Body of pancreas (tissue), 4 donors: ENCODE measurements at regions of chr5 and their contacts with region 1.

Region 1: GRCh38 chr5:36866174-36866573 is 10.4 kb upstream of the NIPBL start:
- DNase-seq: no peak
- ATAC-seq: no peak
- H3K4me3 ChIP-seq: no peak overlapping the region
- H3K27ac ChIP-seq: no peak overlapping the region
- H3K4me1 ChIP-seq: peaks cover 5% of the 10 kb centered on the region
- H3K27me3 ChIP-seq: no peaks in the 10 kb centered on the region
- CTCF ChIP-seq: no peak
- POLR2A ChIP-seq: no peak

Region 2: DNA sequence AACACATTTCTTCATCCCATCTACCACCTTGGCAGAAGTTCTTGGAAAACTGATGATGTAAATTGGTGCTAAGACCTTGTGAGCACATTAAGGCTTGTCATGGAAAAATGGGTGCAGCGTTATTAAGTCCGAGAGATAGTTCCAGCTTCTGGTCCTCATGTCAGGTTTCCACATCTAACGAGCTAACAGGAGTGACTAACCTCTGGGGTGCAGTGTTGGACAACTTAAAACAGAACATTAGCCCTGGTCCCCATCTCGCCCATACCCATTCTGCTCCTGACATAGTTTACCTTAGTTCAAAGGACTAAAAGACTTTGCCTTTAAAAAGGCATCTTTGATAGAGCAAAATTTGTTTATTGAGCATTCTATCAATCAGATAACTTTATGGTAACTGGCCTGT is 131.8 kb before region 1 on chr5:
- intact Hi-C with region 1: loop called (anchors 5 kb)
- DNase-seq: peak in 2 of 4 donors; percentile 26 to 33
- ATAC-seq: no peak
- H3K4me3 ChIP-seq: no peak overlapping the region
- H3K27ac ChIP-seq: no peak overlapping the region
- H3K4me1 ChIP-seq: peaks cover 7% of the 10 kb centered on the region
- H3K27me3 ChIP-seq: peaks cover 0 to 3% of the 10 kb centered on the region in 2 donors
- CTCF ChIP-seq: peak in 5 of 7 experiments; percentile 11 to 56 (median 42)
- POLR2A ChIP-seq: no peak

Region 3: GRCh38 chr5:36796155-36796554 is 70.0 kb before region 1 on chr5:
- intact Hi-C with region 1: no loop called
- DNase-seq: no peak
- ATAC-seq: no peak
- H3K4me3 ChIP-seq: no peak overlapping the region
- H3K27ac ChIP-seq: no peak overlapping the region
- H3K4me1 ChIP-seq: no peaks in the 10 kb centered on the region
- H3K27me3 ChIP-seq: no peaks in the 10 kb centered on the region
- CTCF ChIP-seq: no peak
- POLR2A ChIP-seq: no peak